Mammary epithelial cell (primary cell): ENCODE measurements at regions of chr5 and their contacts with region 1.

Region 1: DNA sequence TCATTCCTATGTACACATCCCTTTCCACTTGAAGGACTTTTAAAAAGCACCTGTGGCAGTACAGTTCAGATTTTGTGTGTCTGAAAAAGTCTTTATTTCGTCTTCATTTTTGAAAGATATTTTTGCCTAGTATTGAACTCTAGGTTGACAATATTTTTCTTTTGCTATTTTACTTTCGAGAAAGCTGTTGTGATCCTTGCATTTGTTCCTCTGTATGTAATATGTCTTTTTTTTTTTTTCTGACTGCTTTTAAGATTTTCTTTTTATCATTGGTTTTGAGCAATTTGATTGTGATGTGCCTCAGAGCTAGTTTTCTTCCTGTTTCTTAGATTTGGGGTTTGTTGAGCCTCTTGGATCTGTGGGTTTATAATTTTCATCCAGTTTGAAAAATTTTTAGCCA is 13.3 kb downstream of the LCP2 start:
- DNase-seq: no peak
- H3K4me3 ChIP-seq: no peak overlapping the region
- H3K27ac ChIP-seq: no peak overlapping the region
- H3K4me1 ChIP-seq: no peaks in the 10 kb centered on the region
- H3K27me3 ChIP-seq: no peaks in the 10 kb centered on the region
- CTCF ChIP-seq: no peak

Region 2: DNA sequence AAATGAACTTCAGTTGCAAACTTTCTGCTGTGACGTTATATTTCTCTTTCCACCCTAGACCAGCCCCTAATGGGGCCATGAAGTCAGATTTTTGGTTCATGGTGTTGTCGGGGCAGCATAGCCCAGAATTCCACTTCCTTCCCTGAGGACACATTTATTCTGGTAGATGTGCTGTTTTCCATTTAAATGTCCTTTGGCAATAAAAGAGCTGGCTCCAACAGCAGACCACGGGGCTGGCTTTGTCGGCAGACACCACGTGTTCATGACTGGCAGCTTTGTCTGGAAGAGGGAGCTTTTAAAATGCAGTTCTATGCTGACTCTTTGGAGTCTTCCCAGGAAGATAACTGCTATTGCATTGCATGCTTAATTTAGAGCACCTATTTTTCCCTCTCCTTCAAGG is 30.9 kb after region 1 on chr5:
- CTCF ChIA-PET with region 1: interaction called, 15 read pairs
- dilution Hi-C with region 1: no loop called
- in situ Hi-C with region 1: no loop called
- intact Hi-C with region 1: no loop called
- DNase-seq: no peak
- H3K4me3 ChIP-seq: no peak overlapping the region
- H3K27ac ChIP-seq: no peak overlapping the region
- H3K4me1 ChIP-seq: no peaks in the 10 kb centered on the region
- H3K27me3 ChIP-seq: no peaks in the 10 kb centered on the region
- CTCF ChIP-seq: no peak